ENCODE measurements at regions of chr16 and their contacts with region 1.

Region 1: GRCh38 chr16:29805378-29806098 is 791 bp upstream of the MAZ start:
- DNase-seq: peak; percentile 95 to 99 (median 98)
- ATAC-seq: peak; percentile 61 to 70
- H3K4me3 Mint-ChIP-seq: peak overlapping the region; percentile 87 to 100 (median 99)
- H3K27ac Mint-ChIP-seq: peak overlapping the region; percentile 98 to 100 (median 100)
- H3K4me1 Mint-ChIP-seq: peaks cover 22 to 50% (median 42%) of the 10 kb centered on the region in 4 donors
- H3K27me3 Mint-ChIP-seq: peaks cover 0 to 1% (median 0%) of the 10 kb centered on the region in 5 donors

Region 2: GRCh38 chr16:29700253-29700987 is 105.1 kb before region 1 on chr16:
- POLR2A ChIA-PET with region 1: interaction called, 148 read pairs
- DNase-seq: peak; percentile 59 to 83 (median 76)
- ATAC-seq: peak in 1 of 2 donors; percentile 27
- H3K4me3 Mint-ChIP-seq: peak overlapping the region; percentile 44 to 87 (median 76)
- H3K27ac Mint-ChIP-seq: peak overlapping the region; percentile 90 to 100 (median 96)
- H3K4me1 Mint-ChIP-seq: peaks cover 18 to 33% (median 30%) of the 10 kb centered on the region in 4 donors
- H3K27me3 Mint-ChIP-seq: peaks cover 0 to 1% (median 0%) of the 10 kb centered on the region in 5 donors

Region 3: DNA sequence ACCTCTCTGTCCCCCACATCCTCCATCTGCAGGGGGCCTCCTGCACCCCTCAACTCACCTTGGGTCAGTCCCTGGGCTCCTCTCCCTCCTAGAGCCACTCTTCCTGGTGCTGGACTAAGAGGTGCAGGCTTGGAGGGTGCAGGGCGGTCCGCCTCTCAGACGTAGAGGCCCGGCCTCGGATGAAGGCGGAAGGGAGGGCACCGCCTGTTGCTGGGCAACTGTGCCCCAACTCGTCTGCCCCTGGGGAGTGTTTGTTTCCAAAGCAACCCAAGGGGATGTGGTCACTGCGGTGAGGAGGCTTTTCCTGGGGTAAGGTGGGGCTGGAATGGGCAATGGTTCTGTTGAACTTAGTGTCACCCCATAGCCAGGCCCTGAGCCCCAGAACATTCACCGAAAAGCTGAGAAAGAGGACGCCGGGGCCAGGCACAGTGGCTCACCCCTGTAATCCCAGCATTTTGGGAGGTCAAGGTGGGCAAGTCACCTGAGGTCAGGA is 59.6 kb before region 1 on chr16 and contains the start of gene C16orf54:
- POLR2A ChIA-PET with region 1: interaction called, 123 read pairs
- DNase-seq: peak; percentile 81 to 100 (median 98)
- ATAC-seq: peak; percentile 71 to 83
- H3K4me3 Mint-ChIP-seq: peak within 1 kb of the TSS; percentile 96 to 100 (median 99)
- H3K27ac Mint-ChIP-seq: peak within 1 kb of the TSS; percentile 82 to 100 (median 100)
- H3K4me1 Mint-ChIP-seq: peaks cover 34 to 76% (median 67%) of the 10 kb centered on the region in 4 donors
- H3K27me3 Mint-ChIP-seq: peaks cover 0 to 4% (median 0%) of the 10 kb centered on the region in 5 donors
- polyA plus RNA-seq, gene C16orf54: 20.7 to 32.7 (median 29.2) TPM

Region 4: DNA sequence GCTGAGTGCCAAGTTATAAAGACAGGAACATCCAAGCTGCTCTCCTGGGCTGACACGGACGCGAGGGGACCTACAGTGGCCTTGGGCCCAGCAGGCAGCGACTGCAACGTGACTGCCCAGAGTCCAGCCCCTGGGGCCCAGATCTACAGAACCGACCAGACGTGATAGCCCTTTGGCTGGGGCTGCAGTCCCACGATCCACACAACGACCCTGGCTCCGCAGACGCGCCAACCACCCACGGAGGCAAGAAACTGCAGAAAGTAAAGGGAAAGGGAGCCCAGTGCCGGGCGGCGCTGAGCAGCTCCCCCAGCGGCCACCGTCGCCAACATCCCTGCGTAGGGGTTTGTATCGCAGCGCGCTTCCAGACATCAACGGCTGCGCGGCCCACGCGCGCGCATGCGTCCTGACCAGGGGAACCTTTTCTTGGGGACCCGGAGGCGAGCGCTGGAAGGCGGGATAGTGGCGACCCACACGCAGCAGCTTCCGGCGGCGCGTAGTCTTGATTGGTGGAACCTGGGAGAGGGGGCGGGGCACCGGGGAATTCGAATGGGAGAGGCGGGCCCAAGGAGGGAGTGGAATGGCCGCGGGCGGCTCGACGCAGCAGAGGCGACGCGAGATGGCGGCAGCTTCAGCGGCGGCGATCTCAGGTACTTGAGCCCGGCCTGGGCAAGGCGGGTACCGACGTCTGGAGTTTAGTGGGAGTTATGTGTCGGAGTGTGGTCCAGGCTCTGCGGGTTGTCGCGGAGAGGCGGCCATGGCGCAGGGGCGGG is 15.2 kb before region 1 on chr16 and contains the start of gene KIF22:
- POLR2A ChIA-PET with region 1: interaction called, 240 read pairs
- DNase-seq: peak; percentile 98 to 100 (median 100)
- ATAC-seq: peak; percentile 92 to 94
- H3K4me3 Mint-ChIP-seq: peak within 1 kb of the TSS; percentile 95 to 99 (median 98)
- H3K27ac Mint-ChIP-seq: peak within 1 kb of the TSS; percentile 98 to 99 (median 99)
- H3K4me1 Mint-ChIP-seq: peaks cover 22 to 58% (median 52%) of the 10 kb centered on the region in 4 donors
- H3K27me3 Mint-ChIP-seq: no peaks in the 10 kb centered on the region
- polyA plus RNA-seq, gene KIF22: 36.9 to 45.4 (median 39.6) TPM

Region 5: GRCh38 chr16:29825145-29826044 is 19.9 kb after region 1 on chr16:
- POLR2A ChIA-PET with region 1: interaction called, 204 read pairs
- DNase-seq: peak in 3 of 10 donors; percentile 44 to 61 (median 47)
- ATAC-seq: peak in 1 of 2 donors; percentile 12
- H3K4me3 Mint-ChIP-seq: peak overlapping the region; percentile 65 to 86 (median 81)
- H3K27ac Mint-ChIP-seq: peak overlapping the region; percentile 72 to 99 (median 95)
- H3K4me1 Mint-ChIP-seq: peaks cover 17 to 89% (median 77%) of the 10 kb centered on the region in 4 donors
- H3K27me3 Mint-ChIP-seq: no peaks in the 10 kb centered on the region

Region 6: DNA sequence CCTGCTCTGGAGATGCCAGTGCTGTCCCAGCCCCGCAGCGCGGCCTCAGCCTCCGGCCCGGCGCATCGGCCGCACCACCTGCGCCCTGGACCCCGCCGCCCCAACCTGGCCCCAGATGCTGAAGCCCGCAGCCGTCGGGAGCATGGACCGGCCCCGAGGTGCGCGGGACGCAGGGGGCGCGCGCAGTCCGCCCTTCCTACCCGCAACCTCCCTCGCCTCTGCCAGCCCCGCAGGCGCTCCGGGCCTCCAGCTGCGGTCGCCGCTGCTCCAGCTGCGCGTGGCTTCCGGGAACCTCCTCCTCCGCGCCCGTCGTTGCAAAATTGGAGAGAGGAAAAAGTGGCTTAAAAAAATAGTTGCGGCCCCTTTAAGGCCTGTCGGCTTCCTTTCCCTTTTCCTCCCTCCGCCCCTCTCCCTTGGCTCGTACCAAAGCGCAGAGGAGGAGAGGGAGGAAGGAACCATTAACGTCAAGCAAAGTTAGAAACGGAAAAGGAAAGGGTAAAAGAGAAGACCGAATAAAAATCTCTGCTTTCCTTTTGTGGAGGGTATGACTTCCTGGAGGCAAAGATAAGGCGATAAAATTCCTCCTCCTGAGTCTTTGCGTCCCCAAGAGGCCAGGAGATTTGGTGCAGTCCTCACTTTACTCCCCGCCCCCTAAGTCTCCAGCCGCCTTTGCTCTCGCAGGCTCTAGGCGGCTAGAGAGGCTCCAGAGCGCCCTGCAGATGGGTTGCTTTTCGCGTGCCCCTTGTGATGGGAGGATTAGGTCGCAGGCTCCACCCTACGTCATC is 57.5 kb after region 1 on chr16 and contains the start of gene CDIPT:
- POLR2A ChIA-PET with region 1: interaction called, 13 read pairs
- DNase-seq: peak; percentile 79 to 97 (median 93)
- ATAC-seq: peak; percentile 96 to 99
- H3K4me3 Mint-ChIP-seq: peak within 1 kb of the TSS; percentile 92 to 97 (median 95)
- H3K27ac Mint-ChIP-seq: peak within 1 kb of the TSS; percentile 97 to 100 (median 99)
- H3K4me1 Mint-ChIP-seq: peaks cover 7 to 38% (median 31%) of the 10 kb centered on the region in 4 donors
- H3K27me3 Mint-ChIP-seq: no peaks in the 10 kb centered on the region
- polyA plus RNA-seq, gene CDIPT: 79.6 to 95.7 (median 91.3) TPM

Region 7: GRCh38 chr16:29961479-29962343 is 156.2 kb after region 1 on chr16 and contains the start of gene TMEM219:
- POLR2A ChIA-PET with region 1: interaction called, 12 read pairs
- DNase-seq: peak; percentile 90 to 98 (median 96)
- ATAC-seq: peak; percentile 84 to 91
- H3K4me3 Mint-ChIP-seq: peak within 1 kb of the TSS; percentile 86 to 94 (median 89)
- H3K27ac Mint-ChIP-seq: peak within 1 kb of the TSS; percentile 77 to 97 (median 93)
- H3K4me1 Mint-ChIP-seq: peaks cover 12 to 29% (median 27%) of the 10 kb centered on the region in 4 donors
- H3K27me3 Mint-ChIP-seq: no peaks in the 10 kb centered on the region
- polyA plus RNA-seq, gene TMEM219: 157 to 179 (median 174) TPM

Measured in naive thymus-derived CD8-positive, alpha-beta T cell (primary cell).